Lower leg skin (tissue), 4 donors: ENCODE measurements at regions of chr11 and their contacts with region 1.

Region 1: GRCh38 chr11:44727373-44728287 is 868 bp downstream of the TSPAN18 start:
- DNase-seq: peak; percentile 68 to 95
- H3K4me3 ChIP-seq: peak overlapping the region; percentile 37
- CTCF ChIP-seq: peak in 1 of 3 donors; percentile 41
- POLR2A ChIP-seq: no peak

Region 2: DNA sequence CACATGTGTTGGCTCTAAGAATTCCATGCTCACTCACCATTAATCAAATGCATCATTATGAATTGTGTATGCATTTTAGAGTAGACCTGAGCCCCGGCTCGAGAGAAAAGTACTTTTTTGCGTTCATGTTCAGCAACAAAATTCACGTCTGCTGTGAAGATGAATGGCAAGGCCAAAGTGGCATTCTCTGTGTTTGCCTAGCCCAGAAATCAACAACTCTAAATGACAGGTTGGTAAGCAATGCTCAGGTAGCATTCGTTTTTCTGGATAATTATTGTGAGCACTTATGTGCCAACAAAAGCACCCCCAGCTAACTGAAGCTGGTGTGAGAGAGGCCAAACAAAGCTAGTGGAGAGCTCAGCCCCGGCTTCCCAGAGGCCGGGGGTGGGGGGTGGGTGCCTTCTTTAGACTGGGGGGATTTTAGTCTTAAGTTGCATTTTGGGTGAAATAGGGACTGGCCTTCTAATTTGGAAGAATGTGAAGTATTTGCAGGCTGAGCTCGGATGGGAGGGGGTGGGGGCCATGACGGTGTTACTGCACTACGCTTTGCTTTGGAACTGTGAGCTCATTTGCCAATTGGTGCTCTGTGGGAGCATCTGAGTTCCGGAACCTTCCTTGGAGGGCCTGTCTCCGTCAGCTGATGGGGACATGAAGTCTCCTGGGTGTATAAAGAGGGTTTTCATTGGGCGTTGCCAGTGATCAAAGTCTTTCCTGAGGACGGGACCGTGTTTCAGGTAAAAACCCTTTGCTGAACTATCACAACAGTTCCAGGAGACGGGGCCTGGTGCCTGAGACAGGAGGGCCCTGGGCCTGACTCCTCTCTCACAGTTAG is 388.7 kb before region 1 on chr11:
- intact Hi-C with region 1: no loop called
- DNase-seq: no peak
- H3K4me3 ChIP-seq: no peak overlapping the region
- CTCF ChIP-seq: no peak
- POLR2A ChIP-seq: no peak

Region 3: GRCh38 chr11:44893846-44894617 is 166.4 kb after region 1 on chr11:
- intact Hi-C with region 1: loop called (anchors 10 kb)
- DNase-seq: peak in 1 of 2 donors; percentile 88
- H3K4me3 ChIP-seq: no peak overlapping the region
- CTCF ChIP-seq: no peak
- POLR2A ChIP-seq: no peak

Region 4: DNA sequence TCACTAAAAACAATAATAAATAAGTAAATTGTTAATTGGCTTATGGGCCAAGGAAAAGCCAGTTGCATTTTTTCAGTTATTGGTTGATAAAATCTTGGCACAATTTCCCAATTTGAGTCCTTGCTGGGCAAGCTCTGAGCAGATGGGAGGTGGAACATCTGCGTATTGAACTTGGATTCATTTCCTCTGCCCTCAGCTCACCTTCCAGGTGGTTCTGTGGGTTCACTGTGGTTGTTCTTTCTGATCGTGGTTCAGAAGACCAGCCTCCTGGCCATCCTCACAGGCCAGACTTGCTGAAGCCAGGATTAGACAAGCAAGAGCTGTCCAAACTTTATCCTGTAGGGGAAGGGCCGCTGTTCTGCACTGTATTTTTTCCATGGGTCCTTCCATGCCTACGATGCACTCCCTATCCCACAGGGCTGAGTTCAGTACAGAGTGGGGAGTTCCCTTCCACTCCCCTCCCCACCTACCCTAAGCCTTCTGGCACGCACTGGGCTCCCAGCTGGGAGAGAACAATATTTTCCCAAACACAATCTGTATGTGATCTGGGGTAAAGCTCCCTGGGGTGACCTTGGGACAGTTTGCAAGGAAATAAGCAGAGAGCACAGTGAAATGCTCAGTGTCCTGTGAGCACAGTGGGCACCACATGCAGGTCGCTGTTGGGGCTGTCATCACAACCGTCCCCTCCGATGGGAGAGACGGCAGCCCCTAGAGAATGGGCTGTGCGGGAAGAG is 266.5 kb after region 1 on chr11:
- intact Hi-C with region 1: no loop called
- DNase-seq: no peak
- H3K4me3 ChIP-seq: no peak overlapping the region
- CTCF ChIP-seq: no peak
- POLR2A ChIP-seq: no peak